Ascending aorta (tissue), 2 donors: ENCODE measurements at regions of chr10 and their contacts with region 1.

Region 1: DNA sequence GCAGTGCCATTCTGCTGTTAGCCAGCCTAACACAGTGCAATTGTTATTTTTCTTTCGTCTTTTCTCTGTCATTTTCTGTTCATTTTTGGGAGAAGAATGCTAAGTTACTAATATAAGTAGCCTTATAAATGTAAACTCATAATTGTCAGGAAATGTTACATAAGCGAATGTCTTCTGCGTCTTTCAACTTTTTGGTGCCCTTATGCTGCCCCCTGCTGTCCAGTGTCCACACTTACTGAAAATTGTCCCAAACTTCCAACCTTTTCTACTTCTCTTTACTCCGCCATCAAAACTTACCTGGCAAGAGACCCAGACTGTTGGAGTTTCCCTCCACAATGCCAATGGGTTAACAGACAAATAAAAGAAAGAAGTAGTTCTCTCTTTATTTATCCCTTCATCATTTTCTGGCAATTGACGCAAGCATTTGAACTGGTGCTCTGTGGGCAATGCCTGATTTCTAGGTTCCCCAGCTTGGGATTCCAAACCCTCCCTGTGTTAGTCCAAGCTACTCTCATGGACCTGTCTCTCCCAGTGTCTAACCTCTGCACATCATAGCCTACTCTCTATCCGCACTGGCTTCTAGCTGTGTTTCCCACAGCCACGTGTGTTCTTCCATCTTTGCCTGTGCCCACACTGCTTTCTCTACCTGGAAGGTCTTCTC is 21.0 kb upstream of the EPC1 start:
- DNase-seq: no peak
- H3K4me3 ChIP-seq: peak overlapping the region in 1 of 2 donors; percentile 24
- H3K27ac ChIP-seq: no peak overlapping the region
- H3K4me1 ChIP-seq: peaks cover 0 to 8% of the 10 kb centered on the region in 2 donors
- H3K27me3 ChIP-seq: no peaks in the 10 kb centered on the region
- CTCF ChIP-seq: peak; percentile 55 to 86 (median 65)

Region 2: DNA sequence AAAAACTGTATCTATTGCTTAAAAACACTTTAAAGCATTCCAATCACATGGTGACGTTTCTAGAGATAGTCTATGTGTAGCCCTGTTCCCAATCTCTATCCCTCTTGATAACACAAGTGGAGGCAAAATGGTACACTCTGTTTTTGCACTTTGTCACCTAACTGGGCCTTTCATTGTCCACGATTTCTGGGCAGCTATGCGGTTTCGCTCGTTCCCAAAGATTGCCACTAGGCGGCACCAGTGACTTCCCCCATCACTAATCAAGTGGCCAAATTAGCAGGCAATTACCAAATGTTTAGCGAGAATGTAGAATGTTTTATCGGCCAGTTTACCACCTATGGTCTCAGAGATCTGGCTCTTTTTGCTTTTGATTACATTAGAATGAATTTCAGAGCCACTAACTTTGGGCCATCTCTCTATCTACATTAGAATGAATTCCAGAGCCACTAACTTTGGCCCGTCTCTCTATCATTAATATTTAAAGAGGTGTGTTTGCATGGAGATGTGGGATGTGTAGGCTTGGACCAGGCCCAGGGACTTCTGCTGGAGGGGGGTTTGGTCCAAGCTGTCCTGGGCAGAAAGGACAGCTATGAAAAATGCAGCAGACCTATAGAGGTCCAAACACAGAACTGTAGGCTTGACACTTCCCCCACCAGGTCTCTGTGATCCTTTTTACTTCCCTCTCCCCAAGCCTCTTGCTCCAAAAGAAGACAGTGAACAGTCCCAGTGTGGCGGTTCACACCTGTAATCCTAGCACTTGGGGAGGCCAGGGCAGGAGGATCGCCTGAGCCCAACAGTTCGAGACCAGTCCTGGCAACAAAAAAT is 111.1 kb before region 1 on chr10:
- intact Hi-C with region 1: loop called (anchors 1 kb)
- DNase-seq: peak in 1 of 2 donors; percentile 82
- H3K4me3 ChIP-seq: no peak overlapping the region
- H3K27ac ChIP-seq: no peak overlapping the region
- H3K4me1 ChIP-seq: no peaks in the 10 kb centered on the region
- H3K27me3 ChIP-seq: no peaks in the 10 kb centered on the region
- CTCF ChIP-seq: peak; percentile 69 to 81 (median 78)